ENCODE measurements at regions of chr17 and their contacts with region 1.

Region 1: GRCh38 chr17:47698749-47699535 is 5.0 kb downstream of the TBKBP1 start:
- DNase-seq: peak; percentile 60
- H3K4me3 Mint-ChIP-seq: no peak overlapping the region
- H3K27ac Mint-ChIP-seq: no peak overlapping the region
- H3K4me1 Mint-ChIP-seq: no peaks in the 10 kb centered on the region
- H3K27me3 Mint-ChIP-seq: peaks cover 9% of the 10 kb centered on the region
- CTCF ChIP-seq: peak; percentile 94

Region 2: DNA sequence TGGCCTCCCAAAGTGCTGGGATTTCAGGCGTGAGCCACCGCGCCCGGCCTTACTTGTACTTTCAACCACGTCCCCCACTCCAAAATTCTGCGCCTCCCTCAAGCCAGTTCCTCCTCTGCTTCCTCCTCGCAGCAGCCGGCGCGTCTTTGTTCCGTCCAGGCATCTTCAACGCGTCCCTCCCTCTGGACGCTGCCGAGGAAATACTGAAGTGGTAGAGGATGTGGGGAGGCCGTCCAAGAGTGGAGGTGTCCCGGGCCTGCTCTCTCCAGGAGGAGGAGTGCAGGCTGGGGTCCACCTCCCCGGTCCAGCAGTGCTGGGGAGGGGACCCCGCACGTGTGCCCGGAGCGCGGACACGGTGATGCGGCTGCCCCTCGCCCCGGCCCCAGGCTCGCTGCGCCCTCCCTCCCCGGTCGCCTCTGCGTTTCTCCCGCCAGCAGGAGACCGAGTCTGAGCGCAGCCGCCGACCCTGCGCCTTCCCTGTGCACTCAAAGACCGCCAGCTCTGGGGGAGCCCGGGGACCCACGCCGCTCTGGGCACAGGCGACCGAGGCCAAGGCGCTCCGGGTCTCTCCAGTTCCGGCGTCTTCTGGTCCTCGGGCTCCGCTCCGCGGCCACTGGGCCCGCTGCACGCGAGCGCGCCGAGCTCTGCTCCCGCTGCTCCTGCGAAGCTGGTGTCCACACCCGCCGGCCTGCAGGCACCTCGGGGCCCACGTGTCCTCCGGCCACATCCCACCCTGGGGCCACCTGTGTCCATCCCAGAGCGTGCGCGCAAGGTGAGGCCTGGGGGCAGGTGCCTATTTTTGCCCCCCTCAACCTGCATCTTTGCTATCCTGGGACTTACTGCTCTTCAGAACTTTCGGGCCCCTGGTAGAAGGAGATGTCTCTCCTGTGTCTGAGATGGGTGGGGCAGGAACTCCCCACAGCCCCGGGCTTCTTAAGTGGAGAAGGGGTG is 90.9 kb after region 1 on chr17:
- CTCF ChIA-PET with region 1: interaction called, 8 read pairs
- POLR2A ChIA-PET with region 1: interaction called, 3 read pairs
- intact Hi-C with region 1: loop called (anchors 1 kb)
- DNase-seq: peak; percentile 36
- H3K4me3 Mint-ChIP-seq: peak overlapping the region; percentile 57
- H3K27ac Mint-ChIP-seq: no peak overlapping the region
- H3K4me1 Mint-ChIP-seq: no peaks in the 10 kb centered on the region
- H3K27me3 Mint-ChIP-seq: peaks cover 90% of the 10 kb centered on the region
- CTCF ChIP-seq: peak; percentile 53

Region 3: GRCh38 chr17:47802341-47803022 is 103.5 kb after region 1 on chr17:
- CTCF ChIA-PET with region 1: interaction called, 33 read pairs
- POLR2A ChIA-PET with region 1: interaction called, 3 read pairs
- intact Hi-C with region 1: loop called (anchors 1 kb)
- DNase-seq: peak; percentile 67
- H3K4me3 Mint-ChIP-seq: no peak overlapping the region
- H3K27ac Mint-ChIP-seq: no peak overlapping the region
- H3K4me1 Mint-ChIP-seq: no peaks in the 10 kb centered on the region
- H3K27me3 Mint-ChIP-seq: peaks cover 8% of the 10 kb centered on the region
- CTCF ChIP-seq: peak; percentile 70